Caco-2 (cell line): ENCODE measurements at regions of chr12 and their contacts with region 1.

Region 1: DNA sequence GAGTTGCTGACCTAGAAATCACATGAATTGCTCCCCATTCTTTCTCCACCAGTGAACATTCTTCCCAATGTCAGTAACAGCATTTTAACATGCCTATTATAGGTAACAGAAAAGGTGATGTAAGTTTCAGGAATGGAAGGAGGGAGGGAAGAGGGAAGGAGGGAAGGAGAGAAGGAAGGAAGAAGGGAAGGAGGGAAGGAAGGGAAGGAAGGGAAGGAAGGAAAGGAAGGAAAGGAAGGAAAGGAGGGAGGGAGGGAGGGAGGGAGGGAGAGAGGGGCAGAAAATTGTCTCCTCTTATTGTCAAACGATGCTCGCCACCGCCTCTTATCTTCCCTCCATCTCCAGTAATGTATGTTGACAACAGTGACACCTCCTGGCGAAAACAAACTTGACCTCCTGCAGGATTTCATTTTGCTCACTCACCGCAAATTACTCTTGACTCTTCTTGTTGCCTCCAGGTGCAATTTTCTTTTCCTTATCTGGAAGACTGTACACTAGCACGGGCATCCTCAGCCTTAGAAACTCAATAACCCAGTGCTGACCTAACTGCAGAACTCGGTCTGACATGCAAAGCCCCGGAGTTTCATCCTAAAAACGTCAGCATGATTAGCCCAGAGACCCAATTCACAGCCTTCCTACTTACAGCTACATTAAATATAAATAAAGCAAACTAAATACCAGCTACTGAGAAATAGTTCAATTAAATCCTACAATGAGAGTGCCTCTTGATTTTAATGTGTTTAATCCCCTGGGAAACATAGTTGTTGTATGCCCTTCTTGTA is 512.5 kb upstream of the TMPO start:
- DNase-seq: peak; percentile 54 to 67
- H3K4me3 ChIP-seq: no peak overlapping the region
- H3K4me3 Mint-ChIP-seq: no peak overlapping the region
- H3K27ac Mint-ChIP-seq: no peak overlapping the region
- H3K4me1 ChIP-seq: no peaks in the 10 kb centered on the region
- H3K4me1 Mint-ChIP-seq: no peaks in the 10 kb centered on the region
- H3K27me3 ChIP-seq: no peaks in the 10 kb centered on the region
- H3K27me3 Mint-ChIP-seq: no peaks in the 10 kb centered on the region
- CTCF ChIP-seq: peak; percentile 61 to 72

Region 2: GRCh38 chr12:97368455-97369163 is 634.3 kb before region 1 on chr12:
- CTCF ChIA-PET with region 1: no interaction called
- POLR2A ChIA-PET with region 1: no interaction called
- intact Hi-C with region 1: loop called (anchors 1 kb)
- DNase-seq: peak in 1 of 2 experiments; percentile 11
- H3K4me3 ChIP-seq: no peak overlapping the region
- H3K4me3 Mint-ChIP-seq: no peak overlapping the region
- H3K27ac Mint-ChIP-seq: no peak overlapping the region
- H3K4me1 ChIP-seq: no peaks in the 10 kb centered on the region
- H3K4me1 Mint-ChIP-seq: peaks cover 6% of the 10 kb centered on the region
- H3K27me3 ChIP-seq: no peaks in the 10 kb centered on the region
- H3K27me3 Mint-ChIP-seq: no peaks in the 10 kb centered on the region
- CTCF ChIP-seq: peak in 1 of 2 experiments; percentile 22